ENCODE measurements at regions of chr11 and their contacts with region 1.

Region 1: GRCh38 chr11:90204832-90205646 is 17.8 kb downstream of the CHORDC1 start:
- DNase-seq: no peak

Region 2: DNA sequence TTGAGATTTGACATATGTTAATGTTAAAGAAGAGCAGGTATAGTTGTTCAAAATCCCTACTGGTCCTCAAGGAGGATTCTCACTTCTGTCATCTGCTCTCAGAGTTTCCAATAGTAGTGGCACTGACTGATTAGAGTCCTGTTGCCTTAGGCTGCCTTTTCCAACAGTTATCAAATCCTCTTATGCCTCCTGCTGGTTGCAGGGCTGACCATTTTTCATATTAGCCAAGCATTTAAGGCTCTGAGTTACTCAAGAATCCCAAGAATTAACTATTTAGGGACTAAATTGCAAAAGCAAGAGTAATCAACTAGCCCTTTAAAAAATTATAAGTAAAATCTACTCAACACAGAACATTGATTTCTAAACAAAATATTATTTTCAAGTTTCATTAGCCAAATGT is 229.8 kb after region 1 on chr11:
- intact Hi-C with region 1: loop called (anchors 10 kb)
- DNase-seq: no peak